Naive thymus-derived CD4-positive, alpha-beta T cell (primary cell): ENCODE measurements at regions of chr9 and their contacts with region 1.

Region 1: GRCh38 chr9:4315582-4316215 is 15.8 kb upstream of the GLIS3 start:
- DNase-seq: peak; percentile 37 to 74 (median 62)
- ATAC-seq: peak; percentile 89
- H3K4me3 ChIP-seq: no peak overlapping the region
- H3K4me3 Mint-ChIP-seq: no peak overlapping the region
- H3K27ac ChIP-seq: no peak overlapping the region
- H3K27ac Mint-ChIP-seq: no peak overlapping the region
- H3K4me1 ChIP-seq: no peaks in the 10 kb centered on the region
- H3K4me1 Mint-ChIP-seq: peaks cover 0 to 17% (median 6%) of the 10 kb centered on the region in 7 donors
- H3K27me3 ChIP-seq: no peaks in the 10 kb centered on the region
- H3K27me3 Mint-ChIP-seq: peaks cover 0 to 13% (median 0%) of the 10 kb centered on the region in 5 donors

Region 2: GRCh38 chr9:4339357-4339756 is 23.7 kb after region 1 on chr9:
- CTCF ChIA-PET with region 1: interaction called, 38 read pairs
- POLR2A ChIA-PET with region 1: interaction called, 5 read pairs
- intact Hi-C with region 1: loop called (anchors 1 to 2 kb)
- DNase-seq: peak; percentile 62 to 84 (median 77)
- ATAC-seq: peak; percentile 90
- H3K4me3 ChIP-seq: no peak overlapping the region
- H3K4me3 Mint-ChIP-seq: peak overlapping the region in 9 of 10 donors; percentile 10 to 70 (median 48)
- H3K27ac ChIP-seq: no peak overlapping the region
- H3K27ac Mint-ChIP-seq: peak overlapping the region; percentile 16 to 92 (median 44)
- H3K4me1 ChIP-seq: no peaks in the 10 kb centered on the region
- H3K4me1 Mint-ChIP-seq: peaks cover 3 to 8% (median 7%) of the 10 kb centered on the region in 7 donors
- H3K27me3 ChIP-seq: no peaks in the 10 kb centered on the region
- H3K27me3 Mint-ChIP-seq: peaks cover 0 to 2% (median 0%) of the 10 kb centered on the region in 5 donors

Region 3: DNA sequence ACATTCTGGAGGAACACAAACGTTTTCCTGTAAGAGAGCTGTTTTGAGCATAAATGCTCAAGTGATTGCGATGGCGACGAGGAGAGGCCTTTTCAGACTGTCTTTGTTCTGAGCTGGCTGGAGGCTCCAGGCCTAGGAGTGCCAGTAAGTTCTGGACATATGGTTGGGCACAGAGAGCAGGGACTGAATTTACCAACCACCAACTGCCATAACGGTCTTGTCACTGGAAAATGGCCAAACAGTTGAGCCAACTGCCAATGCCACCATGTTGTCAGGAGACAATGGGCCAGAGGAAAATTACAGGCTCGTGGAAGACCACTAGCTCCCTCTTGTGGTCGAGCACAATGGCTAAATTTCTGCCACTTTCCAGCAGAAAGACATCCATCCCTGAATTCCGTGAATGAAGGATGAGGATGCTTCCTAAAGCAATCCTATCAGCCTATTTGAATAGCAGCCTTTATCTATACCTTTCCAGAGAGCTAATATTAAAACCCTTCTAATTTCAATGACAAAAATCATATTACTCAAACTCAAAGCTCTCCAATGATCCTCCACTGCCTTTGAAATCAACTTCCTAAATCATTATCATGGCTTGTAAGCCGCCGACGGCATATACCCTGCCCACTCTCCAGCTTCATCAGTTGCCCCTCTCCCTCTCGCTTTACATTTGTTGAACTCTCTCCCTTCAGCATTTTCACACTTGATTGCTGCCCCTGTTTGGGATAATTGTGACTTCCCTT is 51.1 kb after region 1 on chr9:
- CTCF ChIA-PET with region 1: interaction called, 21 read pairs
- POLR2A ChIA-PET with region 1: no interaction called
- intact Hi-C with region 1: loop called (anchors 1 kb)
- DNase-seq: peak in 5 of 9 donors; percentile 11 to 37 (median 23)
- ATAC-seq: no peak
- H3K4me3 ChIP-seq: no peak overlapping the region
- H3K4me3 Mint-ChIP-seq: no peak overlapping the region
- H3K27ac ChIP-seq: no peak overlapping the region
- H3K27ac Mint-ChIP-seq: no peak overlapping the region
- H3K4me1 ChIP-seq: no peaks in the 10 kb centered on the region
- H3K4me1 Mint-ChIP-seq: peaks cover 0 to 1% (median 0%) of the 10 kb centered on the region in 7 donors
- H3K27me3 ChIP-seq: no peaks in the 10 kb centered on the region
- H3K27me3 Mint-ChIP-seq: peaks cover 0 to 8% (median 0%) of the 10 kb centered on the region in 5 donors

Region 4: DNA sequence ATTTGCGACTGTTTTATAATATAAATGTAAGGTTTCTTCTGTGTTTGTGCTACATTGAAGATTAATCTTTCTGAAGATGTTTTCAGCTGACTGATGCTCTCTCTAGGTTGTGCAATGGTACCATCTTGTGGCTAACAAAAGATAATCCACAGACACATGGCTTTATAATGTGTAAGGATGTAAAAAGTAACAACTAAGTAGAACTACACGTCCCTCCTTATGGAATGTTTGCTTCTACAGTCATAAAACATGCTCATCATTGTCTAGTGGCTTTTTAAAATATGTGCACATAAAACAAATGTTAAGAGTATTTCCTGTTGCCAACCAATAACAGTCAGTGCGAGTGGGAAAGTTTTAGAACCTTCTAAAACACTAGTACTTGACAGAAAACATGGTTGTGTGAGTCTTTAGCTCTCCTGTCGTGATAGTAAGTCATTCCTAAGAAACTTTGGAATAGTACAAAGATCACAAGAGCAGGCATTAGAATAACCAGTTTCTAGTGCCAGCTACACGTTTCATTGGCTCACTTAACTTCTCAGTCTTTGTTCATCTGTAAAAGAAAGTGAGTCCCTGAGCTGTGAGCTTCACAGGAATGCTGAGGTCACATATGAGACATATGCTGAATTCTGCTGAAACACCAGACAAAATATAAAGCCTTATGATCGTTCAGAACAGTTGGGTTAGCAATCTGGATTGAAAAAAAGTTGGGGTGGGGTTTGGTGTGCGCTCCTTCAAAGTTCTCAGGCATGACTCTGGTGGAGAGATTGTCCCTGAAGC is 59.9 kb after region 1 on chr9:
- CTCF ChIA-PET with region 1: interaction called, 5 read pairs
- POLR2A ChIA-PET with region 1: no interaction called
- intact Hi-C with region 1: loop called in 1 of 2 experiments (anchors 2 kb)
- DNase-seq: peak in 4 of 9 donors; percentile 24 to 32 (median 30)
- ATAC-seq: peak; percentile 55
- H3K4me3 ChIP-seq: no peak overlapping the region
- H3K4me3 Mint-ChIP-seq: no peak overlapping the region
- H3K27ac ChIP-seq: no peak overlapping the region
- H3K27ac Mint-ChIP-seq: peak overlapping the region in 1 of 9 donors; percentile 55
- H3K4me1 ChIP-seq: no peaks in the 10 kb centered on the region
- H3K4me1 Mint-ChIP-seq: no peaks in the 10 kb centered on the region
- H3K27me3 ChIP-seq: peaks cover 0 to 4% of the 10 kb centered on the region in 2 donors
- H3K27me3 Mint-ChIP-seq: peaks cover 0 to 22% (median 11%) of the 10 kb centered on the region in 5 donors